ENCODE measurements at regions of chr15 and their contacts with region 1.

Region 1: GRCh38 chr15:49155110-49155833 is at the start of gene COPS2:
- DNase-seq: peak; percentile 97
- H3K4me3 Mint-ChIP-seq: peak within 1 kb of the TSS; percentile 99
- H3K27ac Mint-ChIP-seq: peak within 1 kb of the TSS; percentile 97
- H3K4me1 Mint-ChIP-seq: peaks cover 50% of the 10 kb centered on the region
- H3K27me3 Mint-ChIP-seq: no peaks in the 10 kb centered on the region
- total RNA-seq, gene COPS2: 79.8 to 80.0 TPM

Region 2: GRCh38 chr15:48810414-48811317 is 344.6 kb before region 1 on chr15 and contains the start of gene CEP152:
- CTCF ChIA-PET with region 1: no interaction called
- POLR2A ChIA-PET with region 1: interaction called, 7 read pairs
- intact Hi-C with region 1: loop called (anchors 1 kb)
- DNase-seq: peak; percentile 99
- H3K4me3 Mint-ChIP-seq: peak within 1 kb of the TSS; percentile 96
- H3K27ac Mint-ChIP-seq: peak within 1 kb of the TSS; percentile 95
- H3K4me1 Mint-ChIP-seq: peaks cover 36% of the 10 kb centered on the region
- H3K27me3 Mint-ChIP-seq: peaks cover 1% of the 10 kb centered on the region
- total RNA-seq, gene CEP152: 36.1 to 39.4 TPM

Region 3: GRCh38 chr15:48914717-48915116 is 240.6 kb before region 1 on chr15:
- CTCF ChIA-PET with region 1: no interaction called
- POLR2A ChIA-PET with region 1: no interaction called
- intact Hi-C with region 1: no loop called
- DNase-seq: no peak
- H3K4me3 Mint-ChIP-seq: no peak overlapping the region
- H3K27ac Mint-ChIP-seq: no peak overlapping the region
- H3K4me1 Mint-ChIP-seq: peaks cover 2% of the 10 kb centered on the region
- H3K27me3 Mint-ChIP-seq: peaks cover 23% of the 10 kb centered on the region

Region 4: DNA sequence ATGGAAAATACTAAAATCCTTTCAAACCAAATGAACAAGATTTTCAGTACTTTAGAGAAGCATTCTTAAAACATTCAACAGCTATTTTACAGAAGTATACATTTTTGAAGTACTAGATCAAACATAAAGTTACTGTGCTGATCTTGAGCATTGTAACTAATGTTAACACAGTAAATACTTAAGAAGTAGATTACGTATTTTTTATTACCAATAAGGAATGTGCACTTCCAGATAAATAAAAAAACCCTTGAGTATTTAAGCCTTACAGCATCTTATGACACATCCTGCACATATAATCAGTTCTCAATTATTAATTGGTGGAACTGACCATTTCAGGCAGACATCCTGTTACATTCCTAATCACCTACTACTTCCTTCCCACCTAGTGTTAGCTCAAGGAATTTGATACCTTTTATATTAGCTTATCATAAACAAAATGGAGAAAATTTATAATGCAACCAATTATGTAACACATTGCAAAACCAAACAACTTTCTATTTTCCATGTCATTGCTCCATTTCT is 32.7 kb before region 1 on chr15:
- CTCF ChIA-PET with region 1: no interaction called
- POLR2A ChIA-PET with region 1: no interaction called
- intact Hi-C with region 1: no loop called
- DNase-seq: no peak
- H3K4me3 Mint-ChIP-seq: no peak overlapping the region
- H3K27ac Mint-ChIP-seq: no peak overlapping the region
- H3K4me1 Mint-ChIP-seq: no peaks in the 10 kb centered on the region
- H3K27me3 Mint-ChIP-seq: no peaks in the 10 kb centered on the region

Region 5: DNA sequence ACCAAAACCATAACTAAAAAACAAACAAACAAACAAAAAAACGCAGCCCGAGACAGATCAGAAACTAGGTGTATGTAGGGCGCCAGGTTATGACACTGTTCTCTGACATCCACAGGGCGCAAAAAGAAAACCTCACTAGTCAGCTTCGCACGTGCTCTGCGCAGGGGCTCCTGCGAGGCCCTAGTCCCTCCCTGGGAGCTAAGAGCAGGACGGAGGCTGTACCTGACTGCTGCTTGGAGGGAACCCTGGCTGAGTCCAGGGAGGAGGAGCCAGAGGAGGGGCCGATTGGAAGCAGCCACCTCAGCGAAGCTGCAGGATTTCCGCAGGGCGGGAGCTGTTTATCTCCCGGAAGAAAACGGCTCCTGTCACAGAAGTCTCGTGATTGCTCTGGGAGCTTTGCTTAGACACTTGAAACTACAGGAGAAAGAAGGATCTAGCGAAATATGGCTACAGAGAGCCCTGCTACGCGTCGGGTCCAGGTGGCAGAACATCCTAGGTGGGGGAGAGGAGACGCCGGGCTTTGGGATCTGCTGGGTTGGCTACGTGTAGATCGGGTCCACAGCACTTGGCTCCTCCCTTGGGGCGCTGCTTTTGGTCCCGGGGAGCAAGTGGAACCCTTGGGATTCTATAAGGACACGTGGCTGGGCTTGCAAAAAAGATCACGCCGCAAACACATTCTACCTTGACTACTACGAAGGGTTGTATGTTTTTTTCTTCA is 14.8 kb after region 1 on chr15 and contains the start of gene GALK2:
- CTCF ChIA-PET with region 1: interaction called, 7 read pairs
- POLR2A ChIA-PET with region 1: interaction called, 48 read pairs
- intact Hi-C with region 1: loop called (anchors 1 kb)
- DNase-seq: peak; percentile 92
- H3K4me3 Mint-ChIP-seq: peak within 1 kb of the TSS; percentile 87
- H3K27ac Mint-ChIP-seq: peak within 1 kb of the TSS; percentile 88
- H3K4me1 Mint-ChIP-seq: peaks cover 30% of the 10 kb centered on the region
- H3K27me3 Mint-ChIP-seq: no peaks in the 10 kb centered on the region
- total RNA-seq, gene GALK2: 31.1 to 33.1 TPM

Region 6: DNA sequence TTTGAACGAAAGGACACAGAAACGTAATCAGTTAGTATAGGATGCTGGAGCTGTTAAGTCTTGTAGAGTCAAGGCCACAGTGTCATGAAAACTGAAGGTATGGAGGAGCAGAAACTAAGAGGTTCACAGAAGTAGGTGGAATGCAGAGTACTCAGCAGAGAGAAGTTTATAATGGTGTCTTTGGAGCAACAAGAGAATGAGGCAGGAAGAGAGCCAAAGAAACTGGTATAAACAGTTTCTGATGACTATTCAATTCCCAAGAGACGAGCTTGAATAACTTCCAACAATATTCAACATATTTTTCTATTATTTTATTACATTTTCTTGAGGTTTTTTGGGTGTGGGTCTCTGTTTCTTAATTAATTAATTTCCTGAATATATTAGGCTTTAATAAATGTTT is 44.4 kb after region 1 on chr15:
- CTCF ChIA-PET with region 1: no interaction called
- POLR2A ChIA-PET with region 1: no interaction called
- intact Hi-C with region 1: no loop called
- DNase-seq: no peak
- H3K4me3 Mint-ChIP-seq: no peak overlapping the region
- H3K27ac Mint-ChIP-seq: no peak overlapping the region
- H3K4me1 Mint-ChIP-seq: peaks cover 4% of the 10 kb centered on the region
- H3K27me3 Mint-ChIP-seq: no peaks in the 10 kb centered on the region

Region 7: GRCh38 chr15:49620658-49621368 is 465.5 kb after region 1 on chr15 and contains the starts of genes DTWD1 and FAM227B:
- CTCF ChIA-PET with region 1: no interaction called
- POLR2A ChIA-PET with region 1: no interaction called
- intact Hi-C with region 1: loop called (anchors 1 kb)
- DNase-seq: peak; percentile 96
- H3K4me3 Mint-ChIP-seq: peak within 1 kb of the TSS; percentile 94
- H3K27ac Mint-ChIP-seq: peak within 1 kb of the TSS; percentile 92
- H3K4me1 Mint-ChIP-seq: peaks cover 32% of the 10 kb centered on the region
- H3K27me3 Mint-ChIP-seq: no peaks in the 10 kb centered on the region
- total RNA-seq, gene DTWD1: 14.3 to 18.5 TPM
- total RNA-seq, gene FAM227B: 2.8 to 3.8 TPM

Measured in activated CD4-positive, alpha-beta memory T cell treated with anti-CD3 and anti-CD28 coated beads for 36 hours (primary cell).